ENCODE measurements at regions of chr10 and their contacts with region 1.

Region 1: GRCh38 chr10:1420661-1421362 is 316.5 kb downstream of the ADARB2 start:
- DNase-seq: peak; percentile 73
- ATAC-seq: peak; percentile 97
- H3K4me3 Mint-ChIP-seq: peak overlapping the region; percentile 37
- H3K27ac Mint-ChIP-seq: no peak overlapping the region
- H3K4me1 Mint-ChIP-seq: peaks cover 2% of the 10 kb centered on the region
- H3K27me3 Mint-ChIP-seq: peaks cover 16% of the 10 kb centered on the region

Region 2: DNA sequence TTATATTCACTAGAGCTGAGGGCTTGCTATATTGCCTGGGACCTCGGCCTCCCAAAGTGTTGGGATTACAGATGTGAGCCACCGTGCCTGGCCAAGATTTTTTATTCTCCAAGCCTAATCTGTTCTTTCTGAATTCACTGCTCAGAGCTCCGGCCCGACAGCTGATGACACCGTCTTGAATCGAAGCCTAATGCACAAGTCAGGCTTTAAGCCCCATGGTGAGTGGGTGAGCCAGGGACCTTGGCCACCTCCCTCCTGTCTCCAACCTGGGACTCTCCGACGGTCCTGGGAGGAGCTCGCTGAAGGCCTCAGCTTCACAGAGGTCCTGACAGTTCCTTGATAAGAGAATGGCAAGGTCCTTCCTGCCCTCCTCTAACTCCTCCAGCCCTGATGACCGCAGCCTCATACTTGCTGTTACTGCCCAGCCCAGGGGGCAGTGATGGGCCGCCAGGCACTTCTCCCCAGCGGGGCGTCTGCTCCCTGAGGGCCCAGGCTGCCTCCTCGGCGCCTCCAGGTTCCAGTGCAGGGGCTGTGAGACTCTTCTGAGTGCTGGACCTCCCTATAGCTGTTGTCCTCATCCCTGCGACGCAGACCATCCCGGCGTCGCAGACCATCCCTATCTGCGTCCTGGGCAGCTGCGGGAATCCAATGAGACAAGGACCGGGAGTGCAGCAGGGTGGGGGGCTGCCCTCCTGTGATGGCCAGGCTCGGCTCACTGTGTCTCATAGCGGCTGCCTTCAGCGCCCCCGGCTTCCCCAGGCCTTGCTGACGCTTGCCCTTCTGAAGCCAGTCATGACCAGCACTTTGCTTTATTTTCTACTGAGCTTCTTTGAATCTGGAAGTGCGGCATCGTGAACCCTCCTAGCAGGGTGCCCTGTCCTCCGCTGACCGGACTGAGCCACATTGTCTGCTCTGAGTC is 25.5 kb before region 1 on chr10:
- CTCF ChIA-PET with region 1: no interaction called
- POLR2A ChIA-PET with region 1: no interaction called
- DNase-seq: no peak
- ATAC-seq: no peak
- H3K4me3 Mint-ChIP-seq: no peak overlapping the region
- H3K27ac Mint-ChIP-seq: no peak overlapping the region
- H3K4me1 Mint-ChIP-seq: no peaks in the 10 kb centered on the region
- H3K27me3 Mint-ChIP-seq: no peaks in the 10 kb centered on the region

Region 3: DNA sequence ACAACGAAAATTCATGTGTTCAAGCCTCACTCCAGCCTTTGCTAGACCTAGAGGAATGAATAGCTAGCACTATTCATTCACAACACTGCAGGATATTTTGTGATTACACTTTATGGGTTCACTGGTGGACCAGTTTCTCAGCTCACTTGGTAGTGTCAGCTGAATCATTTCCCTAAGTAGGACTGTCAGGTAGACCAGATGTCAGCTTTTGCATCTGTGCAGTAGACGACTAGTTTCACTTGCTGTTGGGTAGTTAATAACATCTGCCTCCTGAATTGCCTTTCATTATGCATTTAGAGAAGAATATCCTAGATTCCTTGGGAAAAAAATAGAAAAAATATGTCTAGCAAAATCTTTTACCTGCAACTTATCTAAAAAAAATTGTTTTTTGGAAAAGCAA is 20.1 kb after region 1 on chr10:
- CTCF ChIA-PET with region 1: interaction called, 11 read pairs
- POLR2A ChIA-PET with region 1: no interaction called
- DNase-seq: no peak
- ATAC-seq: no peak
- H3K4me3 Mint-ChIP-seq: no peak overlapping the region
- H3K27ac Mint-ChIP-seq: no peak overlapping the region
- H3K4me1 Mint-ChIP-seq: no peaks in the 10 kb centered on the region
- H3K27me3 Mint-ChIP-seq: no peaks in the 10 kb centered on the region